GM23248 (cell line): ENCODE measurements at regions of chr5 and their contacts with region 1.

Region 1: GRCh38 chr5:58460732-58461286 is 923 bp upstream of the PLK2 start:
- DNase-seq: peak; percentile 91
- H3K4me3 ChIP-seq: peak overlapping the region; percentile 98
- H3K27ac ChIP-seq: peak overlapping the region; percentile 73
- H3K4me1 ChIP-seq: peaks cover 29% of the 10 kb centered on the region
- H3K27me3 ChIP-seq: no peaks in the 10 kb centered on the region

Region 2: DNA sequence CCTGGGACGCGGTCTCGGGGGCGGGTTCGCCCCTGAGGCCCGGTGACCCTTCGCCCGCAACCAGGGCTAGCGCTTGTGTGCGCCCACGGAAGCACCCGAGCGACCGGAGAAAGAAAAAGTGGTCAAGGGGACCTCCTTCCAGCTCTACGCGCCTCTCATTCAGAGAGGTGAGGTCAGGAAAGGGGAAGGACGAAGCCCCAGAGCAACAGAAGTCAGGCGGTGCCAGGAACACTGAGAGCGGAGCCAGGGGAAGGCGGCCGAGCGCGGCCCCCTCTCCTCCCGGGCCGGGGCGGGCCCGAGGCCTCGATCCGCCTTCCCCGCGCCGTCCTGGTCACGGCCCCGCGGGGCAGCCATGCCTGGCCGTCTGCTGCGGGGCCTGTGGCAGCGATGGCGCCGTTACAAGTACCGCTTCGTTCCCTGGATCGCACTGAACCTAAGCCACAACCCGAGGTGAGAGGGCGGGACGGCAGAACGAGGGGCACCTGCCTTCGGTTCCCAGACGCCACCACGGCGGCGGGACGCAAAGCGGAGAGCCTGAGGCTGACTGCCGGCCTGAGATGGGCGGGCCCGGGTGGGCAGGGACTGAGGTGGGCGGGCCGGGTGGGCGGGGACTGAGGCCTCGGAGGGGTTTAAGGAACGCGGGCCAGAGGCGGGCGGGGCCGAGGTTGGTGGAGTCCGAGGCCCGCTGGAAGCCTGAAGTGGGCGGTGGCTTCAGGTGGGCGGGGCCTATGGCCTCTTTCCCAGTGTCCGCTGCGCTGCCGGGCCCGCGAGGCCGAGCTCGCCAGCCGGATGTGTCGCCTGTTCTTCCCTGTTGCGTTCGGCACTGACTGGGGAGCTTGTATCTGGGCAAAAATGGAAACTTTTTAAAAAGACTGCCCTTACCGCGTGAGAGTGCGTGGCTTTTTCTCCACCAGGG is 1551.3 kb before region 1 on chr5 and contains the start of gene SETD9:
- in situ Hi-C with region 1: loop called (anchors 25 kb)
- DNase-seq: peak; percentile 99
- H3K4me3 ChIP-seq: peak within 1 kb of the TSS; percentile 85
- H3K27ac ChIP-seq: peak within 1 kb of the TSS; percentile 95
- H3K4me1 ChIP-seq: peaks cover 5% of the 10 kb centered on the region; the same call in 1 of the 2 replicates
- H3K27me3 ChIP-seq: 0 out of 2 replicates have a peak, but pooled peaks cover 6% of the 10 kb centered on the region
- total RNA-seq, gene SETD9: 18.5 and 22.5 TPM in 2 replicates

Region 3: GRCh38 chr5:57298295-57298984 is 1162.4 kb before region 1 on chr5:
- in situ Hi-C with region 1: loop called (anchors 5 kb)
- DNase-seq: peak; percentile 90
- H3K4me3 ChIP-seq: 0 out of 2 replicates have a peak overlapping the region, but pooled peaks have one; percentile 11
- H3K27ac ChIP-seq: peak overlapping the region; percentile 12; the same call in 1 of the 2 replicates
- H3K4me1 ChIP-seq: peaks cover 14% of the 10 kb centered on the region
- H3K27me3 ChIP-seq: no peaks in the 10 kb centered on the region

Region 4: DNA sequence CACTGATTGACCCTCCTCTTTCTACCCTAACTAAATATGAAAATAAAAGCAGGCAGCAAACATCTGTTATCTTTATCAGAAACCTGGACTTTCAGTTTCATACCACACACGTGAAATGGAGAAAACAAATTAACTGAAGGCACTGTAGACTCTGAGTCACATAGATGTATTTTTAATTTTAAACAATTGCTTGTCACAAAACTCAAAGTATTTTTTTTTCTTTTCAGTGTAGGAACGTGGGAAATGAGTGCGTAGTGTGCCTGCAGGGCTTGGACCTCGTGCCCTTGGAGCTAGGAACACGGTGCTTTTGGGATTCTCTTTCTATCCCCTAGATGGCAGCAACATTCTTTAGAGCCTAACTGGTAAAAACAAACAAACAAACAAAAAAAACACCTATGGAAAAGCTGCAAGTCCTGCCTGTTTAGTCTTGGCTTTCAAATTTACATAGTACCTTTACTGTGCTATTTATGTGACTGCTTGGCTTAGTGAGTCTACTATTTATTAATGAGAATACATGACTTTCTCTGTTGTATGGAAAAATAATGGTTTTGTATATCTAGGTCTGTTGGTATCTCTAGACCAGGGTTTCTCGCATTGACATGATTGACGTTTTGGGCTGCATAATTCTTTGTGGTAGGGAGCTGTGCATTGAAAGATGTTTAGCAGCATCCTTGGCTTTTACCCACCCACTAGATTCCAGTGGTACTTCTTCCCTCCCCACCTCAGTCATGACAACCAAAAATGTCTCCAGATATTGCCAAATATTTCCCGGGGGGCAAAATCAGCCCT is 961.4 kb before region 1 on chr5:
- in situ Hi-C with region 1: loop called (anchors 5 kb)
- DNase-seq: peak; percentile 75
- H3K4me3 ChIP-seq: peak overlapping the region; percentile 40
- H3K27ac ChIP-seq: no peak overlapping the region
- H3K4me1 ChIP-seq: peaks cover 15% of the 10 kb centered on the region
- H3K27me3 ChIP-seq: no peaks in the 10 kb centered on the region

Region 5: DNA sequence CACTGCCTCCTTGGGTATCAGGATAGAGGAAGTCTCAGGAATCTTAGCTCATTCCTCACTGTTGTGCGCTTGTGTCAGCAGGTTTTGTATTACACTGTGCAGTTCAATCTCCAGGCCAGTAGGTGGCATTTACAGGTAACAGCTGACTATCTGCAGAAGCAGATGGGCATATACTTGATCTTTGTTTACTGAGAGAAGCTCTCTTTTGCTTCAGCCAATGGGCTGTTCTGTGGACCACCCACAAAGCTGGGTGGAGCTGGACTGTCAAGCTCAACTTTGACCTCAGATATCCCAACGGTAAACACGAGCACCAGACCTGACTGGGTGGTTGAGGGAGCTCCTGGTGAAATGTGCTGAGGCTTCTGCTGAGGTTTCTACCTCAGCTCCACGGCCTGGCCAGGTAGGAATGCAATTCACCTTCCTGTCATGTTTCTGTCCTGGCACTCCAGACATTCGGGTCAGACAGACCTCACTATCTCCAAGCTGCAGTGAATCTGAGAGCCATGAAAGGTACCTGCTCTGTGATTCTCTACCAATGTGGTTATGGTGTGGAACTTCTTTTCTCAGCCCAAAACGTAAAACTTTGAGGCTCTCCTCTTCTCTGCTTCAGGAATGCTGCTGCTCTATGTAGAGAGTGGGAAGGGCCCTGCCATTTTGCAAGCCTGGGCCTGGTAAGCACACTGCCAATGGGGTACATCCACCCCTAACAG is 810.3 kb before region 1 on chr5:
- in situ Hi-C with region 1: loop called (anchors 25 kb)
- DNase-seq: peak; percentile 70
- H3K4me3 ChIP-seq: no peak overlapping the region
- H3K27ac ChIP-seq: no peak overlapping the region
- H3K4me1 ChIP-seq: no peaks in the 10 kb centered on the region
- H3K27me3 ChIP-seq: no peaks in the 10 kb centered on the region

Region 6: DNA sequence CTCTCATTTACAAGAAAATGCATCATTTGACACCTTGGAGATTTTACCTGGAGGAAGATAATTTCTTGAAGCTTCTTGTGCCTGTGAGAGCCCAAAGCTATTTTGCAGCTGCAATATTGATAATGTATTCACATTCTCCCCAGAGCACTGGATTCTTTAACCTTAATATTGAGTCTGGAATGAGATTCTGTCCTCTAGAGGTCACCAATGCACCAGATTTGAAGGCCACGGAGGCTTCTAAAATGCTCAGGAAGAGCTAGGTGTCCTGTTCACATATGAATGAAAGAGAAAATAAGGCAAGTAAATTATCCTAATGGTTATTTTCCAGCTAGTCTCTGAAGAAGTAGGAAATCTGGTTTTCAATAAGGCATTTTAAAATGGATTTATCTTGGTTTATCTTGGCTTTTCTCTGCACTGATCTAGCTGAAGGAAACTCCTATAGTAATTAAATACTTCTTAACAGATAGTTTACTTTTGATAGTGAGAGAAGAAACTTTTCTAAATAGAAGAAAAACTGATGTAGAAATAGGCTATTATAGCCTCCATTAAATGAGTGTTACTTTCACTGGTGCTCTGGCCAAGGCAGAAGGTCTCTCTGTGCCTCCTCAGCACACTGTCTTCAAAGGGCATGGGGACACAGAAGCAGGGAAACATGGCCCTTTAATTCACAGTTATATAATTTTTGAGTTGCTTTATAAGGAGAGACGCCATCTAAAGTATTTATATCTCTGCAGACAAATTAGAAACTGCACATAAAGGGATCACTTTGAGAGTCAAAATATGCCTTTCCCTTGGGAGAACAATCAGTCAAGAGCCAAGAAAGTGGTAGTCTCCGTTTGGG is 681.2 kb before region 1 on chr5:
- in situ Hi-C with region 1: loop called (anchors 10 kb)
- DNase-seq: peak; percentile 82
- H3K4me3 ChIP-seq: no peak overlapping the region
- H3K27ac ChIP-seq: no peak overlapping the region
- H3K4me1 ChIP-seq: peaks cover 21% of the 10 kb centered on the region
- H3K27me3 ChIP-seq: no peaks in the 10 kb centered on the region

Region 7: GRCh38 chr5:57887851-57888621 is 572.8 kb before region 1 on chr5:
- in situ Hi-C with region 1: loop called (anchors 5 kb)
- DNase-seq: peak; percentile 71
- H3K4me3 ChIP-seq: no peak overlapping the region
- H3K27ac ChIP-seq: no peak overlapping the region
- H3K4me1 ChIP-seq: peaks cover 14% of the 10 kb centered on the region
- H3K27me3 ChIP-seq: no peaks in the 10 kb centered on the region

Region 8: GRCh38 chr5:59062986-59063683 is 602.3 kb after region 1 on chr5:
- in situ Hi-C with region 1: no loop called
- DNase-seq: no peak
- H3K4me3 ChIP-seq: no peak overlapping the region
- H3K27ac ChIP-seq: no peak overlapping the region
- H3K4me1 ChIP-seq: peaks cover 44% of the 10 kb centered on the region
- H3K27me3 ChIP-seq: no peaks in the 10 kb centered on the region